Dendritic cell treated with granulocyte-macrophage colony-stimulating factor and Interleukin-4, amounts not matched to agents 40 ng/mL and 50 ng/mL, for 4 days (primary cell): ENCODE measurements at regions of chr7 and their contacts with region 1.

Region 1: DNA sequence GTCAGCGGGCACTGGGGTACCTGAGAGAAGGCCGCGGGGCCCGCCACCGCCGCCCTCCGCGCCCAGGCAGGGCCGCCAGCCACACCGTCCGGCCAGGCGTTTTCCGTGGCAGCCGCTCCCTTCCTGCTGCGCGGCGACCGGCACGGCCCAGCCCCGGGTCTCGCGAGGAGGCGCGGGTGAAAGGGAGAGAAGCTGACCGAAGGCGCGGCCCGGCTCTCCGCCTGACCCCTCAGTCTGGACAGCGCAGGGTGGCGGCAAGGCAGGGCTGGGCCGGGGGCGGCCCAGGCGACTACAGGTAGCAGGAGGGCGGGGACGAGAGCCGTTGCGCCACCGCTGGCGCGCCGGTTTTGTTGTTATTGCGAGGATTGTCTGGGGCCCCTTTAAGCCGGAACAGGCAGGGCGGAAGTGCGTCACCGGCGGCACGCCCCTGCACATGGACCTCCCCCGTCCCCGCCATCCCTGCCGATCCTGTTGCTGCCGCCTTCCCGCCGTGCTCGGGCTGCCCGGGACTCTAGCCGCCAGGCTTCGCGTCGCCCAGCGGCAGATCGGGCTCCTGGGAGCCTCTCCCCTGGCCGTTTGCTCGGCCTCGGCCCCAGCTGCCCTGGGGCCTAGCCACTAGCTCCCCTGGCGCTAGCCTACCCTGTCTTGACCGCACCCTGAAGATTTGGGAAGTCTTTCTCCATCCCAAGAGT is at the start of gene HERPUD2:
- H3K4me3 Mint-ChIP-seq: peak within 1 kb of the TSS; percentile 98
- H3K27ac Mint-ChIP-seq: peak within 1 kb of the TSS; percentile 99
- H3K4me1 Mint-ChIP-seq: peaks cover 43% of the 10 kb centered on the region
- H3K27me3 Mint-ChIP-seq: no peaks in the 10 kb centered on the region

Region 2: GRCh38 chr7:35729061-35729783 is 34.3 kb after region 1 on chr7:
- intact Hi-C with region 1: loop called (anchors 5 kb)
- H3K4me3 Mint-ChIP-seq: peak overlapping the region; percentile 45
- H3K27ac Mint-ChIP-seq: peak overlapping the region; percentile 87
- H3K4me1 Mint-ChIP-seq: peaks cover 74% of the 10 kb centered on the region
- H3K27me3 Mint-ChIP-seq: peaks cover 5% of the 10 kb centered on the region